AG04450 (cell line): ENCODE measurements at regions of chr2 and their contacts with region 1.

Region 1: DNA sequence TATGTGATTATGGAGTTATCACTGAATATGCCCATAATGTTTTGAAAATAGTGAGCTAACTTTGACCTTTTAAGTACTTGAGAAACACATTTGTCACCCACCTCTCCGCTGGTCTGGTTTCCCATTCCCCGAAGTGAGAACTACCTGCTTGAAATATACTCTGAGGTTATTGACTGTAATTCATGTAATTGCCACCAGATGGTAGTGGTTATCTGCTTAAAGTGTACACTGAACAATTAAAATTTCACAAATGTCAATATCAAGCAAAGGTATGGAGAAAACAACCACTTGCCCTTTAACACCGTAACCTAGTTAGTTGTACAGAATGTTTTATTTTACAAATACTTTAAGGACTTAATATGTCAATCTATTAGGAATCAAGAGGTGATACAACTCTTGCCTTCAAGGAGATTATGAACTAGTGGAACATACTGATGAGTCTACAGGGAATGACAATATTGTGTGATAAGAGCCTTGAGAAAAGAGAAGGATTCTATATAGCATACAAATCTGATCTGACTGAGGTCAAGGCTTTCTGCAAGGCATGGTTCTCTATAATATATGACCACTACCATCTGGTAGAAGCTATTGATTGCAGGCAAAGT is 316.8 kb upstream of the KCNH7 start:
- DNase-seq: no peak
- H3K4me3 ChIP-seq: no peak overlapping the region
- H3K27ac ChIP-seq: no peak overlapping the region
- H3K27me3 ChIP-seq: no peaks in the 10 kb centered on the region
- CTCF ChIP-seq: peak; percentile 69

Region 2: GRCh38 chr2:163132850-163133249 is 22.5 kb before region 1 on chr2:
- CTCF ChIA-PET with region 1: interaction called, 13 read pairs
- POLR2A ChIA-PET with region 1: no interaction called
- DNase-seq: no peak
- H3K4me3 ChIP-seq: no peak overlapping the region
- H3K27ac ChIP-seq: no peak overlapping the region
- H3K27me3 ChIP-seq: no peaks in the 10 kb centered on the region
- CTCF ChIP-seq: peak; percentile 60